ENCODE measurements at regions of chr11 and their contacts with region 1.

Region 1: DNA sequence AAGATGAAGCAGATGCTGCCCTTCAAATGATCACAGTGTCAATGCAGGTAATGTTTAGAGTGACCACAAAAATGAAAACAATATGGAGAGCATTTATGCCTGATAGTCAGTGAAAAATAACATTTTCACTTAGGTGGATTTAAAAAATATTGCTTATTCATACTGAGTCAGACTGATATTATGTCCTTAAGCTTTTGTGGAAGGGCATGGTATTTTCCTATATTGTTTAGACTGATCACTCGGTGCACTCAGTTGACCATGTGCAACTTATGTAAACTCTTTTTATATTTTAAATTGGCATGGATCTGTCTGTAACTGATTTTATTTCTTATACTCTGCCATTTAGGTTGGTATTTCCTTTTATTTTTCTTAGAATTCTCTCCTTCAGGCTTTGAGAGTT is 106.6 kb downstream of the DYNC2H1 start:
- DNase-seq: peak; percentile 41
- ATAC-seq: peak; percentile 60
- H3K4me3 ChIP-seq: no peak overlapping the region
- H3K27ac ChIP-seq: no peak overlapping the region
- H3K4me1 ChIP-seq: peaks cover 2% of the 10 kb centered on the region; the same call in 1 of the 2 replicates
- H3K27me3 ChIP-seq: no peaks in the 10 kb centered on the region
- CTCF ChIP-seq: no peak
- POLR2A ChIP-seq: no peak
- RAD21 ChIP-seq: no peak

Region 2: DNA sequence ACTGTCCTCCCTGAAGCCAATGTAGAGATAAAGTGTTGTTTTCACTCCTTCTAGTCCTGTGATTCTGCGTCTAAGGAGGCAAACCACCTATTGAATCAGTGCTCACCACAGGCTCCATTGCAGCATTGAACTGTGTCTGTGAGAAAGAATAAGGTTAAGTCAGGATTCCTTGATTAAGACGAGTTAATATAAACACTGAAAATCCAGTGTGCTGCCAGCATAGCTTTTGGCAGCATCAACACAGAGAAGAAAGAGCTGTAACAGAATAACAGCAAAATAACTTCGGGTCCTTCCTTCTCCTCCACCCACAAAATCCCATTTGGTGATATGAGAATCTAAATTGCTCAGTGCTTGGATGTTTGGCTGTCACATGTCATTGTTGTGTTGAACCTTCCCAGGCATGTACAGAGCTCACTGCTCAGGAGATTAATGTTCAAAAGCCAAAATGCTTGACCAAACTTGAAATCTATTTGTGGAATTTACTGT is 635.4 kb after region 1 on chr11:
- CTCF ChIA-PET with region 1: no interaction called
- POLR2A ChIA-PET with region 1: interaction called, 13 read pairs
- dilution Hi-C with region 1: no loop called
- in situ Hi-C with region 1: no loop called
- intact Hi-C with region 1: no loop called
- DNase-seq: peak; percentile 69
- ATAC-seq: peak; percentile 77
- H3K4me3 ChIP-seq: no peak overlapping the region
- H3K27ac ChIP-seq: peak overlapping the region; percentile 67; the same call in 1 of the 2 replicates
- H3K4me1 ChIP-seq: peaks cover 4% of the 10 kb centered on the region
- H3K27me3 ChIP-seq: no peaks in the 10 kb centered on the region
- CTCF ChIP-seq: no peak
- POLR2A ChIP-seq: no peak
- RAD21 ChIP-seq: no peak

Measured in IMR-90 (cell line).